GM10248 (cell line): ENCODE measurements at regions of chr9 and their contacts with region 1.

Region 1: DNA sequence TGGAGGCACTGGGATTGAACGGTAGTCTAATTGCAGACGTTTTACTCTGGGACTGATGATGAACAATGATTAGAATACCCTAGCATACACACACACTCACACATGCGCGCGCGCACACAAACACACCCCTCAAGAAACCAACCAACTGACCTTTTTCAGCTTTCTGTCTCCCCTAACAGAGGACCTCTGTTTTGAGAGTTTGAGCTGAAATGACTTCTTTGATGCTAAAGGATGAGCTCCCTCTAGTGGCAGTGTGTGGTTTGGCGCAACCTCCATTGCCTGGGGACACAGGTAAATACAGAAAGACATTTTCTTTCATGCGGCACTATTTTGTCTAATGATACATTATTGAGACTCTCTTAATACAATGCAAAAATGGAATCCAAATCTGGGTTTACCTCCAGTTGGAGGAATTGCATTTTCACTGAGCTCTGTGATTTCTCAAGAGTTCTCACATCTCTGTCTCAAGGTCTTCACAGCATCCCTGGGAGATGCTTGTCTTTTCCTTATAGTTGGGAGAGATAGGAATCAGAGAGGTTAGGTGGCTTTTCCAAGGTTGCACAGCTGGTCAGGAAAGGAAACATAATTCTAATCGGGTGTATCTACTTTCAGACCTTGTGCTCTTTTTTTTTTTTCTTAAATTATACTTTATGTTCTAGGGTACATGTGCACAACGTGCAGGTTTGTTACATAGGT is 187.5 kb downstream of the TMEM38B start:
- DNase-seq: peak; percentile 57
- CTCF ChIP-seq: peak; percentile 95

Region 2: GRCh38 chr9:105608721-105609598 is 272.8 kb before region 1 on chr9:
- CTCF ChIA-PET with region 1: interaction called, 11 read pairs
- POLR2A ChIA-PET with region 1: no interaction called
- DNase-seq: peak; percentile 34
- CTCF ChIP-seq: peak; percentile 42

Region 3: DNA sequence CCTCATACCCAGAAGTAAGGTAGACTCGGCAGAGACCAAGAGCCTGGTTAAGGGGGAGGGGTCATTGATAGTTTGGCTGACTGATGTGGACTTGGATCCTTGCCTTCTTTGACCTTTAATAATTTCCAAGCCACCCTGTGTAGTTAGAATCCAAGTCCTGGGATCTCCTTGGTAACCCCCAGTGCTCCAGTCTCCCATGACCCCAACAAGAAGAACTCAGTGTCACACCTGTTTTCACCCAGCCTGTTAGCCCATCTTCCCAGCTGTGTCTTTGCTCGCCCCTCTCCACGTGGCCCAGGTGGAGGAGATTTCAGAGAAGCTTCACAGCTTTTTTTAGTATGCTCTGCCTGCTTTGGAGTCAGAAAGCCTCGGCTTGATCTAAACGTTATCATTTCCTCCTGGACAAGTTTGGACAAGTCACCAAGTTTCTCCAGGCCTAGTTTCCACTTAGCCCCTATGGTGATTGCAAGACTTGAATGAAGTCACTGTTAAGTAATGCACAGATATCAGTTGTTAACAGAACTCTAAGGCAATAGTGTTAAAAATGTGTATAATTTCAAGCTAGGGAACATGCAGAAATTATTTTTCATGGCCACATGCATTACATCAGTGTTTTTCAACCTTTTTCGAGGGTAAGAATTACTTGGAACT is 17.4 kb before region 1 on chr9:
- CTCF ChIA-PET with region 1: interaction called, 30 read pairs
- POLR2A ChIA-PET with region 1: no interaction called
- DNase-seq: no peak
- CTCF ChIP-seq: no peak

Region 4: DNA sequence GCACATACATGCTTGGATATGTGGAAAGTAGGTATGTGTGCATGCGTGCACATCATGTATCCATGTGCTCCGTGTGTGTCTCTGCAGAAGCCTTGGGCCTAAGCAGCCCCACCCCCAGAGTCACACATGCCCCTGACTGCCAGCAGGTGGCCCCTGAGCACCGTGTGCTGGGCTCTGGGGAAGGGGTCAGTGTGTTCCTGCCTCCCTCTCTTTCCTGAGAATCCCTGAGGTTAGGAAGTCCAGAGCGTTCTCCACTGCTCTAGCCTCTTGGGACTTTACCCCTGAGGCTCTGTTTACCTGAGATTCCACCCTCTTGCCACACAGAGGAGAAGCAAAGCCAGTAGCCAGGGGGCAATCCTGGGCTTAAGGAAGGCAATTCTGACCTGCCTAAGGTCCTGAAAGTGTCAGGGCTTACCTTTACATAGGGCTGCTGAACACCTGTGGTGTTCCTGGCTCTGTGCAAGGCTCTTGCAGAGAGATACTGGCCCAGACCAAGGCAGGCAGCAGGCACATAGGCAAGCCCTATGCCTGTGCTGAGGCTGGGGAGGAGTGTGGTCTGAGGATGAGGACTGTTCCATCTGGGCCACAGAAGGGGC is 19.8 kb after region 1 on chr9:
- CTCF ChIA-PET with region 1: interaction called, 20 read pairs
- POLR2A ChIA-PET with region 1: no interaction called
- DNase-seq: peak; percentile 41
- CTCF ChIP-seq: peak; percentile 49